ENCODE measurements at regions of chr4 and their contacts with region 1.

Region 1: GRCh38 chr4:27484216-27484615 is 623.6 kb downstream of the STIM2 start:
- DNase-seq: no peak
- H3K4me3 ChIP-seq: no peak overlapping the region
- H3K27ac ChIP-seq: no peak overlapping the region
- H3K4me1 ChIP-seq: no peaks in the 10 kb centered on the region
- H3K27me3 ChIP-seq: no peaks in the 10 kb centered on the region
- CTCF ChIP-seq: no peak
- EP300 ChIP-seq: no peak
- POLR2A ChIP-seq: no peak

Region 2: GRCh38 chr4:27048429-27049238 is 435.6 kb before region 1 on chr4:
- intact Hi-C with region 1: loop called in 1 of 4 experiments (anchors 10 kb)
- DNase-seq: no peak
- H3K4me3 ChIP-seq: no peak overlapping the region
- H3K27ac ChIP-seq: no peak overlapping the region
- H3K4me1 ChIP-seq: no peaks in the 10 kb centered on the region
- H3K27me3 ChIP-seq: no peaks in the 10 kb centered on the region
- CTCF ChIP-seq: peak; percentile 48 to 67 (median 57)
- EP300 ChIP-seq: no peak
- POLR2A ChIP-seq: no peak

Measured in ovary (tissue), 10 donors.